CD8-positive, alpha-beta T cell (primary cell): ENCODE measurements at regions of chr3 and their contacts with region 1.

Region 1: GRCh38 chr3:150408221-150409102 is at the start of gene TSC22D2:
- DNase-seq: peak; percentile 95 to 99 (median 97)
- ATAC-seq: peak; percentile 70
- H3K4me3 ChIP-seq: peak within 1 kb of the TSS; percentile 85 to 90
- H3K4me3 Mint-ChIP-seq: peak within 1 kb of the TSS; percentile 89
- H3K27ac ChIP-seq: peak within 1 kb of the TSS; percentile 92 to 96
- H3K27ac Mint-ChIP-seq: peak within 1 kb of the TSS; percentile 99
- H3K4me1 ChIP-seq: peaks cover 16% of the 10 kb centered on the region
- H3K4me1 Mint-ChIP-seq: peaks cover 33% of the 10 kb centered on the region
- H3K27me3 ChIP-seq: no peaks in the 10 kb centered on the region
- H3K27me3 Mint-ChIP-seq: no peaks in the 10 kb centered on the region
- CTCF ChIP-seq: no peak
- total RNA-seq, gene TSC22D2: 49.3 to 51.7 TPM

Region 2: DNA sequence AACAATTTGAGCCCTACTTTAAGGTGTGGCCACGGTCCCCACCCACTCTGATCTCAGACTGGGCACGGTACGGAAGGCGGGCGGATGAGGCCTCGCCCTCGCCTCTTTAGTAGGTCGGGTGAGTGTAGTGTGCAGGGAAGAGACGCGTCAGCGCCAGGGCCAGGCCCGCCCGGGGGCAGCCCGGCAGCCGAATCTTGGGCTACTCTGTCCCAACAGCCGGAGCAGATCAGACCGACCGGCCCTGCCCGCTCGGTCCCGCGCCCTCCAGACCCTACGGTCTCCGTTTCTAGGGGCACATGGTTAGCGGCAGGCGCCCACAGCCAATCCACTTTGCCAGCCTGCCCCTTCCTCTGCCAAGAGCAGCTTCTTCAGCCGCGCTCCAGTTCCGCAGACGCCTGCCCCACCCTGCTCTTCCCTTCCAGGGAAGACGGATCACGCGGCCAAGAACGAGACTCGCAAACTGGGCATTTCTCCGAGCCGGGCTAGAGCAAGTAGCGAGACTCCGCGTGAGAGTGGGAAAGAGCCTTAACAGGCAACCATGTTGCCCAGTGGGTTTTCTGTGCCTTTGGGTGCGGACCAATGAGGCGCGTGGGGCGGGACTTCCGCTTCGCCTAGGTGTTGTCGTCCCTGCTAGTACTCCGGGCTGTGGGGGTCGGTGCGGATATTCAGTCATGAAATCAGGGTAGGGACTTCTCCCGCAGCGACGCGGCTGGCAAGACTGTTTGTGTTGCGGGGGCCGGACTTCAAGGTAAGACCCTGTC is 595.7 kb before region 1 on chr3 and contains the start of gene RNF13:
- CTCF ChIA-PET with region 1: no interaction called
- POLR2A ChIA-PET with region 1: no interaction called
- intact Hi-C with region 1: loop called (anchors 2 to 10 kb)
- DNase-seq: peak; percentile 83 to 96 (median 93)
- ATAC-seq: peak; percentile 95
- H3K4me3 ChIP-seq: peak within 1 kb of the TSS; percentile 91 to 94
- H3K4me3 Mint-ChIP-seq: peak within 1 kb of the TSS; percentile 99
- H3K27ac ChIP-seq: peak within 1 kb of the TSS; percentile 94 to 95
- H3K27ac Mint-ChIP-seq: peak within 1 kb of the TSS; percentile 100
- H3K4me1 ChIP-seq: peaks cover 29% of the 10 kb centered on the region
- H3K4me1 Mint-ChIP-seq: peaks cover 49% of the 10 kb centered on the region
- H3K27me3 ChIP-seq: no peaks in the 10 kb centered on the region
- H3K27me3 Mint-ChIP-seq: peaks cover 4% of the 10 kb centered on the region
- CTCF ChIP-seq: no peak
- total RNA-seq, gene RNF13: 33.9 to 36.5 TPM

Region 3: DNA sequence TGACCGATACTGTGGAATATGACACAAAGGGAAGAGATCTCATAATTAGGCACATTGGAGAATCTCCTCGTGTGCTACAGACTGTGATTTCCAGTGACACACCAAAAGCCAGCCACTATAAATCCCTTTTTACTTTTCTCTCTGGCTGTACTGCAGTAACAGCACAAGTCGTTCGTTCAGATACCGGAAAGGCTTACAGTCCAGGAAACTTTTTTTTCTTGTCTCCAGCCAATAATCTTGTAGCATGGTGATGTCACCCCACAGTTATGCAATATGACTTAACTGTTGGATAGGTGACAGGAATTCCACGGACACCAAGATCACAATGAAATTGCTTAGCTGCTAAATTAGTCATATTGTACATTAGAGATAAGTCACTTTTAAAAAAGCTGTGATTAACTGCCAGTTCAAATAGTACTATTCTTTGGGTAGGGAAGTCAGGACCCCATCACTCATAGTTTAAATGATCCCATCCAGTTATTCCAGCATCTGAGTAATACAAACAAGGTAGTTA is 36.7 kb before region 1 on chr3:
- CTCF ChIA-PET with region 1: no interaction called
- POLR2A ChIA-PET with region 1: no interaction called
- intact Hi-C with region 1: loop called in 1 of 2 experiments (anchors 5 kb)
- DNase-seq: peak in 1 of 9 experiments; percentile 9
- ATAC-seq: no peak
- H3K4me3 ChIP-seq: no peak overlapping the region
- H3K4me3 Mint-ChIP-seq: no peak overlapping the region
- H3K27ac ChIP-seq: no peak overlapping the region
- H3K27ac Mint-ChIP-seq: no peak overlapping the region
- H3K4me1 ChIP-seq: no peaks in the 10 kb centered on the region
- H3K4me1 Mint-ChIP-seq: no peaks in the 10 kb centered on the region
- H3K27me3 ChIP-seq: no peaks in the 10 kb centered on the region
- H3K27me3 Mint-ChIP-seq: peaks cover 4% of the 10 kb centered on the region
- CTCF ChIP-seq: no peak

Region 4: DNA sequence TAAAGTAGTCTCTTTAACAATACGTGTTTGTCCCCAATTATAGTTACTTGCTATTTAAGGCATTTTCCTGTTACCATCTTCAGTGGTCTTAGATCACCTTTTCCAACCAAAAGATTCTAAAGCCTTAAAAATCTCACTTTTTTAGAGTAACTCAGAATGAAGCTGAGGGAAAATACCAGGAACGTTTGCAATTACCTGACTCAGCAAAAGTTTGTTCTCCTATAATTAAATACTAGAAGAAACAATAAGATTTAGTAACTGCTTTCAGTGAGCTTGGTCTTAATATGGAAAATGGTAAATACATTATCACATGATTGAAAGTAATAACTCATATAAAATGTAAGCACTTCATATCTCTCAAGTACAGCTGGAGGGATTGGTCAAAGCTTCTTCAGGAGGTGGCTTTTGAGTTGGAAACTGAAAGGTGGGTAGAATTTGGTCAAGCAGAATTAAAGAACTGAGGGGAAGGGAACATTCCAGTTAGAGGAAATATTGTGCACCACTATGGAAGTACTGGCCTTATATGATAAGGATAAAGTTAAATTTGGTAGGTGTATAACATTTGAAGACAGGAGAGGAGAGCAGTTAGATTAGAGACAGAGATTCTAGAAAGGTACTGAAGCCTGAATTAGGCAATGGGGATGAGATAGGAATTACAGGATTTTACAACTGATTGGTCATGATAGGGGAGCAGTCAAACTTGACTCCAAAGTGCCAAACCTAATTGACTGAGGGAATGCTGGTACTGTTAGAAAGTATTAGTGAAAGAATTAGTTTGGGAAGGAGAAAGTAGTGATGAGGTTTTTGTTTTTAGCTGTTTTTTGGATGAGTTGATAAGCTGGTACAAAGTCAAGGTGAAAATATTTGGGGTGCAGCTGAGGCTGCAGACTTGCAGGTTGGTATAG is 21.6 kb after region 1 on chr3:
- CTCF ChIA-PET with region 1: interaction called, 8 read pairs
- POLR2A ChIA-PET with region 1: interaction called, 9 read pairs
- intact Hi-C with region 1: loop called in 1 of 2 experiments (anchors 2 kb)
- DNase-seq: no peak
- ATAC-seq: no peak
- H3K4me3 ChIP-seq: no peak overlapping the region
- H3K4me3 Mint-ChIP-seq: no peak overlapping the region
- H3K27ac ChIP-seq: no peak overlapping the region
- H3K27ac Mint-ChIP-seq: no peak overlapping the region
- H3K4me1 ChIP-seq: peaks cover 22% of the 10 kb centered on the region
- H3K4me1 Mint-ChIP-seq: peaks cover 60% of the 10 kb centered on the region
- H3K27me3 ChIP-seq: no peaks in the 10 kb centered on the region
- H3K27me3 Mint-ChIP-seq: no peaks in the 10 kb centered on the region
- CTCF ChIP-seq: no peak

Region 5: GRCh38 chr3:150546226-150547044 is 138.0 kb after region 1 on chr3 and contains the starts of genes EIF2A and SERP1:
- CTCF ChIA-PET with region 1: interaction called, 4 read pairs
- POLR2A ChIA-PET with region 1: interaction called, 35 read pairs
- intact Hi-C with region 1: loop called (anchors 1 kb)
- DNase-seq: peak; percentile 99 to 100 (median 99)
- ATAC-seq: peak; percentile 88
- H3K4me3 ChIP-seq: peak within 1 kb of the TSS; percentile 61 to 84
- H3K4me3 Mint-ChIP-seq: peak within 1 kb of the TSS; percentile 97
- H3K27ac ChIP-seq: peak within 1 kb of the TSS; percentile 91 to 98
- H3K27ac Mint-ChIP-seq: peak within 1 kb of the TSS; percentile 99
- H3K4me1 ChIP-seq: peaks cover 36% of the 10 kb centered on the region
- H3K4me1 Mint-ChIP-seq: peaks cover 74% of the 10 kb centered on the region
- H3K27me3 ChIP-seq: no peaks in the 10 kb centered on the region
- H3K27me3 Mint-ChIP-seq: no peaks in the 10 kb centered on the region
- CTCF ChIP-seq: no peak
- total RNA-seq, gene EIF2A: 156 to 162 TPM
- total RNA-seq, gene SERP1: 143 to 151 TPM

Region 6: DNA sequence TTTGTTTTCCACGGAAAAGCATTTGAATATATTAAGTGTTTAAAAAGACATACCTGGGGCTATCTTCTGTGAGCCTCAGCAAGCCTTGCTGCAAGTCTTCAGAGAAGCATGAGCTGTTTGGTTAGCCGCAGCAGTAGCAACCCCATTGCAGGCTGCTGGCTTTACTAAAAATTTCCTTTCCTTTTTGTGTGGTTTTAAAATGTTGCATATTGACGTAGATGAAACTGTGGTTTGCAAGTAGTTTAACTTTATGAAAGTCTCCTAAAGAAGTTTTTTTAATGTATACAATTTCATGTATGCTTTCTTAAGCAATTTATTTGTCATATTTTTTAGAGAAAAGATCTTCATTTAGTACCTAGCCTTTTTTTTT is 794.6 kb after region 1 on chr3 and contains the start of gene GPR171:
- CTCF ChIA-PET with region 1: no interaction called
- POLR2A ChIA-PET with region 1: interaction called, 3 read pairs
- intact Hi-C with region 1: loop called in 1 of 2 experiments (anchors 5 kb)
- DNase-seq: peak; percentile 46 to 91 (median 68)
- ATAC-seq: peak; percentile 84
- H3K4me3 ChIP-seq: peak within 1 kb of the TSS; percentile 50 to 59
- H3K4me3 Mint-ChIP-seq: peak within 1 kb of the TSS; percentile 76
- H3K27ac ChIP-seq: peak within 1 kb of the TSS; percentile 36 to 72
- H3K27ac Mint-ChIP-seq: peak within 1 kb of the TSS; percentile 91
- H3K4me1 ChIP-seq: peaks cover 67% of the 10 kb centered on the region
- H3K4me1 Mint-ChIP-seq: peaks cover 81% of the 10 kb centered on the region
- H3K27me3 ChIP-seq: no peaks in the 10 kb centered on the region
- H3K27me3 Mint-ChIP-seq: no peaks in the 10 kb centered on the region
- CTCF ChIP-seq: no peak
- total RNA-seq, gene GPR171: 11.5 to 13.4 TPM